ENCODE measurements at regions of chr19 and their contacts with region 1.

Region 1: GRCh38 chr19:35509861-35510625 is 3.4 kb downstream of the DMKN start:
- DNase-seq: peak; percentile 81 to 95
- H3K4me3 ChIP-seq: peak overlapping the region; percentile 77
- H3K27ac ChIP-seq: peak overlapping the region; percentile 90
- H3K4me1 ChIP-seq: peaks cover 24% of the 10 kb centered on the region
- H3K27me3 ChIP-seq: no peaks in the 10 kb centered on the region
- CTCF ChIP-seq: peak; percentile 97

Region 2: DNA sequence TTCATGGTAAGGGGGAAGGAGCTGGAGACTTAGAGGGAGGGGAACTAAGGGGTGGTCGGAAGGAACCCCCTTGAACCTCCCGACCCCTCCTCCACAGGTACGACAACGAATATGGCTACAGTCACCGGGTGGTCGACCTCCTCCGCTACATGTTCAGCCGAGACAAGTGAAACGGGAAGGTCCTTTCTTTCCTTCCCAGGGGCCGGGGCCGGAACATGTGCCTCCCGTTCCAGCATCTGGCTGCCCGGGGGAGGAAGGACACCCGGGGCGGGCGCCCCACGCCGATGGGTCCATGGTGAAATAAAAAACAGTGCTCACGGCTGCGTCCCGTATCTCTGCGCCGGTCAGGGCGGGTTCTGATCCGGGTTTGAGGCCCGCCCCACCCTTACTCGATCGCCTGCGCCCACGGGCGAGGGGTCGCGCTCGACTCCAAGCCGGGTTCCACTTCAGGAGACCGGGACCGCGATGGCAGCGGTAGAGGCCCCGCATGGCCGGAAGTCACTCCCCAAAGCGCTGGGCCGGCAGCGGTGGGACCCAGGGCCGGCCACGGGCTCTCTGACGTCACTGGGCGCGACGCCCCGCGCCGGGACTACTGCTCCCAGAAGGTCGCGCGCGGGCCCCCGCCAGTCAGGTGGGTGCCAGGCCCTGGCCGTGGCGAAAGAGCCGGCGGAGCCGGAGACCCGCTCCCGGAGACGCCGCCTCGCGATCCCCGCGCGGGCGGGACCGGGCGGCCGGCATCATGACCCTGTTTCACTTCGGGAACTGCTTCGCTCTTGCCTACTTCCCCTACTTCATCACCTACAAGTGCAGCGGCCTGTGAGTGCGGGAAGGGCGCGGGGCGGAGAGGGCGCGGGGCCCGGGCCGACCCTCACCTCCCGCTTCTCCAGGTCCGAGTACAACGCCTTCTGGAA is 35.2 kb after region 1 on chr19 and contains the start of gene TMEM147:
- CTCF ChIA-PET with region 1: interaction called, 10 read pairs
- POLR2A ChIA-PET with region 1: no interaction called
- intact Hi-C with region 1: loop called (anchors 1 kb)
- DNase-seq: peak; percentile 66 to 90
- H3K4me3 ChIP-seq: peak within 1 kb of the TSS; percentile 100
- H3K27ac ChIP-seq: peak within 1 kb of the TSS; percentile 59
- H3K4me1 ChIP-seq: peaks cover 14% of the 10 kb centered on the region
- H3K27me3 ChIP-seq: no peaks in the 10 kb centered on the region
- CTCF ChIP-seq: no peak
- total RNA-seq, gene TMEM147: 82.6 and 95.9 TPM in 2 replicates

Region 3: DNA sequence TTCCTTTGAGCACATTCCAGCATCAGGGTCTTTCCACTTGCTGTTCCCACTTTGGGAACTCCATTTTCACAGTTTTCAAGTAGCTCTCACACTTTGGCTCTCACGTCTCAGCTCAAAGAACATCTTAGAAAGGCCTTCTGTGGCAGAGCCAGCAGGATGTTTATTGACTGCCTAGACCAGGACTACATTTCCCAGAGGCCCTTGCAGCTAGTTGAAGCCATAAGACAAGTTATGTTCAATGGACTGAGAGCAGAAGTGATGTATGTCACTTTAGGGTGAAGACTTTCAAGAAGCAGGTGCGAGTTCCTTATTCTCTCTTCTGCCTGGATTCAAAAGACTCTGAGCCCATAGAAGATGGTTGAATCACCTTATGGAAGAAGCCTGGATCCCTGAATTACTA is 98.2 kb after region 1 on chr19:
- CTCF ChIA-PET with region 1: no interaction called
- POLR2A ChIA-PET with region 1: no interaction called
- intact Hi-C with region 1: no loop called
- DNase-seq: no peak
- H3K4me3 ChIP-seq: no peak overlapping the region
- H3K27ac ChIP-seq: no peak overlapping the region
- H3K4me1 ChIP-seq: peaks cover 17% of the 10 kb centered on the region
- H3K27me3 ChIP-seq: no peaks in the 10 kb centered on the region
- CTCF ChIP-seq: no peak

Region 4: GRCh38 chr19:35628565-35629331 is 118.7 kb after region 1 on chr19 and contains the start of gene RBM42:
- CTCF ChIA-PET with region 1: no interaction called
- POLR2A ChIA-PET with region 1: no interaction called
- intact Hi-C with region 1: loop called (anchors 1 kb)
- DNase-seq: peak; percentile 97
- H3K4me3 ChIP-seq: peak within 1 kb of the TSS; percentile 93
- H3K27ac ChIP-seq: peak within 1 kb of the TSS; percentile 66
- H3K4me1 ChIP-seq: peaks cover 5% of the 10 kb centered on the region; the same call in 1 of the 2 replicates
- H3K27me3 ChIP-seq: no peaks in the 10 kb centered on the region
- CTCF ChIP-seq: no peak
- total RNA-seq, gene RBM42: 110 and 153 TPM in 2 replicates

Measured in PC-9 (cell line).